ENCODE measurements at regions of chr15 and their contacts with region 1.

Region 1: GRCh38 chr15:93997084-93997918 is 234.1 kb upstream of the MCTP2 start:
- DNase-seq: peak; percentile 41
- H3K4me3 ChIP-seq: no peak overlapping the region
- H3K27ac ChIP-seq: no peak overlapping the region
- H3K4me1 ChIP-seq: peaks cover 0 to 13% of the 10 kb centered on the region in 2 experiments; a peak in 2 of 4 replicates
- H3K27me3 ChIP-seq: no peaks in the 10 kb centered on the region
- CTCF ChIP-seq: peak; percentile 85
- EP300 ChIP-seq: no peak
- RAD21 ChIP-seq: peak; percentile 73

Region 2: DNA sequence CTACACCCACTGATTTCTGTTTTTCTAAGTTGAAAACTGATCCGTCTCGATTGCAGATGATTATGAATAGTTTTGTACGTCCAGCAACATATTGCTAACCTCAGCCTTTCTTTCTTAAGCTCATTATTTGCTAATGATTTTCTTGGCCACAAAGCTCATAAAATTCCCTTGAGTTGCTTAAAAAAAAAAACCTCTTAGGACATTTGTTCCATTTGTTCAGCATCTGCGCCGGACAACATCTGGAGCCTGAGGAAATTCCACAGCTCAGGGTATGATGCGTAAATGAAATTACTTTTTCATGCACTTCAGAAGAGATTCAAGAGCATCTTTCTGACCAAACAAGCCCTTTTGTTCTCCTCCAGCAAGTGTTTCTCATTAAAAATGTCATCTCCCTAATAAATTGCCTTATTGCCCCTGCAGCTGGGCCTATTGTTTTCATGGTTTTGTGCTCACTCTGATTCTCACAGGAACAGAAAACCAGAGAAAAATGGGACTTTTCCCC is 15.0 kb before region 1 on chr15:
- CTCF ChIA-PET with region 1: interaction called, 32 read pairs
- POLR2A ChIA-PET with region 1: no interaction called
- DNase-seq: peak; percentile 17
- H3K4me3 ChIP-seq: no peak overlapping the region
- H3K27ac ChIP-seq: peak overlapping the region in 1 of 2 experiments; percentile 88; a peak in 2 of 4 replicates
- H3K4me1 ChIP-seq: peaks cover 0 to 20% of the 10 kb centered on the region in 2 experiments; a peak in 2 of 4 replicates
- H3K27me3 ChIP-seq: no peaks in the 10 kb centered on the region
- CTCF ChIP-seq: no peak
- EP300 ChIP-seq: peak in 1 of 2 experiments; percentile 48; a peak in 1 of 4 replicates
- RAD21 ChIP-seq: no peak; the same call in 1 of the 2 replicates

Region 3: DNA sequence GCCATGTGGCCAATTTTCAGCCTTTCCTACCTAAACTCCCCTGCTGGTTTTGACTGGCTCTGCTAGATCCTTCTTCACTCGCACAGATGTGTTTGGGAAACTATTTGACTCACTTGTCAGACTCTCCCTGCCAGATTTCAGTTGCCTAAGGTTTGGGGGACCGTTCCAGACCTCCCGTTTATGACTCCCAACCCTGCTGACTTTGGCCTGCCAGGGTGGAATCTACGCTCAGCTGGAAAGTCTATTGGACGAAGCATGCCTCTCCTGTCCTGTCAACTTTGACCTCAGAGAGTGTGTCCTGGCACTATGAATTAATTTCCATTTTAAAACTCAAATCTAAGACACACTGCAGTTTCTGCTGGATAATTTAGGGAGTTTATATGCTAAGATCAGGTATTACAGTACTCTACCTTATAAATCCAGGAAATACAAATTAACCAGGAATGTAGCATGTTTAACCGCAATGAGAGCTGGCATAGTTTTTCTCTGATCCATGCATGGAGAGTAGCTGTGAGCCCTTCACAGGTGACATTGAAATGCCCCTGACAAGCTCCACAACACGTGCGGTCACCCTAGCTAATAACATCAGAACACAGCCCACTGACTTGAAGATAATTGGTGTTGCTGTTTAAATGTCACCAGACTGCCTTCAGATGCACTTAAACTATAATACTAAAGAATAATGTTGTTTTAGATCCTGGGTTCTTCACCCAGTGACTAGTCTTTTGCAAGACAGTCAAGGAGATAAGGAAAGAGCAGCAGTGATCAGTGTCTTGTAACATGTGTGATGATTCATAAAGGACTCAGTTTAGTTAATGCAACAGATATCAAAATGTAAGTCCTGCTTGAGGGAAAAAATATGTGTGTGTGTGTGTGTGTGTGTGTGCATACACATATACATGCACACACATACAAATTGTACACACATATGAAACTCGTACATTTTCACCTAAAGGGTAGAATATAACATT is 11.1 kb after region 1 on chr15:
- CTCF ChIA-PET with region 1: interaction called, 21 read pairs
- POLR2A ChIA-PET with region 1: no interaction called
- DNase-seq: no peak
- H3K4me3 ChIP-seq: no peak overlapping the region
- H3K27ac ChIP-seq: no peak overlapping the region
- H3K4me1 ChIP-seq: 0 out of 4 replicates have a peak, but pooled peaks cover 0 to 7% of the 10 kb centered on the region in 2 experiments
- H3K27me3 ChIP-seq: no peaks in the 10 kb centered on the region
- CTCF ChIP-seq: no peak
- EP300 ChIP-seq: no peak
- RAD21 ChIP-seq: no peak

Region 4: GRCh38 chr15:94125156-94125555 is 127.9 kb after region 1 on chr15:
- CTCF ChIA-PET with region 1: interaction called, 35 read pairs
- POLR2A ChIA-PET with region 1: no interaction called
- DNase-seq: no peak
- H3K4me3 ChIP-seq: no peak overlapping the region
- H3K27ac ChIP-seq: peak overlapping the region in 1 of 2 experiments; percentile 16; a peak in 1 of 4 replicates
- H3K4me1 ChIP-seq: peaks cover 0 to 6% of the 10 kb centered on the region in 2 experiments; a peak in 1 of 4 replicates
- H3K27me3 ChIP-seq: no peaks in the 10 kb centered on the region
- CTCF ChIP-seq: no peak
- EP300 ChIP-seq: peak in 1 of 2 experiments; percentile 18; a peak in 1 of 4 replicates
- RAD21 ChIP-seq: no peak